ENCODE measurements at regions of chr10 and their contacts with region 1.

Region 1: DNA sequence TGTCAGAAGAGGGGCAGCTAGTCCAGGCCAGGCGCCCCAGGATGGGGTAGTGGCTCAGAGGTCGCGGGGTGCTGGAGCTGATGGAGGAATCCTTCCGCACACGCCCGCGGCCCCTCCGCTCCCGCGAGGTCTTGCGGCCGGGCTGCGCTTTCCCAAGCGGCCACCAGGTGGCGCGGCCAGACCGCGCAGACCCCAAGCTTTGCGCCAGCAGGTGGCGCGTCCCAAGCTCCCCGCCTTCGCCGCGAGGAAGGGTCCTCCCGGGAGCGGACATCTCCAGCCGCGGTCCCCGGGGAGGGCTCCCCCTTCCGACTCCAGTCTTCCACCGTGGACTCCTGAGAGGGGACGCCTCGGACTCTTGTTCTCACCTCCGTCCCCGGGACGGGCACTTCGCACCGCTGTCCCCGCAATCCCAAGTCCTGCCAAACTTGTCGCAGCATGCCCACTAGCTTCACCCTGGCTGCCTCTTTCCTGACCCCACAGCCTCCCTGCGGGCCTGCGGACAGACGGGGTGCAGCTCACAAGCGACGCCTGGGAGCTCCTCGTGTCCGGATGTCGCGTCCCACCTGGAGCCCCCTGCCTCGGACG is 19.4 kb downstream of the KCNK18 start:
- DNase-seq: peak; percentile 29
- H3K4me3 ChIP-seq: peak overlapping the region; percentile 67
- H3K27ac ChIP-seq: no peak overlapping the region
- H3K27me3 ChIP-seq: peaks cover 10% of the 10 kb centered on the region
- CTCF ChIP-seq: peak; percentile 100

Region 2: DNA sequence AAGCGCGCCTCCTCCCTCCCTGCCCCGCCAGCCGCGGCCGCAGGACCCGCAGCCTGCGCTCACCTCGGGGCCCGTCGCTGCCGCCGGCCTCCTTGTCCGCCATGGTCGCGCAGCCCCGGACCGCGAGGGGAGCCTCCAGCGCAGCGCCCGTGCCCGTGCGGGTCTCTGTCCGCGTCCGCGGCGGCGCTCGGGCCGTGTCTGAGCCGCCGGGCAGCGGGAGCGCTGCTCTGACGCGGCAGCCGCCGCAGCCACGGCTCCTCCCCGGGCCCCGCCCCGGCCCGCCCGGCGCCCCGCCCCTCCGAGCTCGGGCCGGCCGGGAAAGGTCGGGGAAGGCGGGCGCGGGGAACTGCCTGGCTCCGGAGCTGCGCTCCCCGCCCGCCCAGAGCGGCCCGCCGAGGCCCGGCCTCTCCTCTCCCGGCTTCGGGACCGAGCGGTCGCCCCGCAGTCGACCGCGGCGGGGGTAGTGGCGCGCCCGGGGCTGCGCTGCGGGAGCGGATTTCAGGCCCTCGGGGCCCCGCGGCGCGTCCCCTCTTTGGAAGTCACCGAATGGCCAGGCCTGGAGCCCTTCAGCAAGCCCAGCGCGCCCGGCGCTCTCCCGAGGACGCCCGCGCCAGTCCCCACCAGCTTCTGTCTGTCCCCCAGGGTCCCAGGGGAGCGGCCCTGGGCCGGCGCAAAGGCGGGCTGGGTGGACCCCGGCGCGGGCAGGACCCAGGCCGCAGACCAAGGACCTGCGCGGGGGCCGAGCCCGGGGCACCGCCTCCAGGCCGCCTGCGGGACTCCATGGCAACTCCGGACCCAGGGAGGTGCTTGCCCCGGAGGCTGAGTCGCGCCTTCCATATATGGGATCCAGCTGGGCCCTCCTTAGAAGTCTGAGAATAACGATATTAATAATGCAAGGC is 474.1 kb before region 1 on chr10 and contains the start of gene HSPA12A:
- CTCF ChIA-PET with region 1: no interaction called
- POLR2A ChIA-PET with region 1: no interaction called
- DNase-seq: peak; percentile 59
- H3K4me3 ChIP-seq: peak within 1 kb of the TSS; percentile 79
- H3K27ac ChIP-seq: peak within 1 kb of the TSS; percentile 65
- H3K27me3 ChIP-seq: no peaks in the 10 kb centered on the region
- CTCF ChIP-seq: no peak
- polyA plus RNA-seq, gene HSPA12A: 20.0 and 20.5 TPM in 2 replicates

Region 3: DNA sequence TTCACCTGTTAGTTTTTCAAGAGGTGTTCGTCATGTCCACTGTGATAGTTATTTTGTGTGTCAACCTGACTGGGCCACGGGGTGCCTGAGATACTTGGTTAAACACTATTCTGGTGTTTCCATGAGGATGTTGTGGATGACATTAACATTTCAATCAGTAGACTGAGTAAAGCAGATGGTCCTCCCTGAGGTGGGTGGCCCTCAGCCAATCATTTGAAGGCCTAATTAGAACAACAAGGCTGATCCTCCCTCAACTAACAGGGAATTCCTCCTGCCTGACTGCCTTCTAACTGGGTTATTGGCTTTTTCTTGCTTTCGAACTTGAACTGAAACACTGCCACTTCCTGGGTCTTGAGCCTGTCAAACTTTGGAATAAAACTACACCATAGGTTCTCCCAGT is 291.6 kb before region 1 on chr10:
- CTCF ChIA-PET with region 1: no interaction called
- POLR2A ChIA-PET with region 1: no interaction called
- DNase-seq: no peak
- H3K4me3 ChIP-seq: no peak overlapping the region
- H3K27ac ChIP-seq: no peak overlapping the region
- H3K27me3 ChIP-seq: no peaks in the 10 kb centered on the region
- CTCF ChIP-seq: no peak

Region 4: GRCh38 chr10:117226824-117227451 is 10.2 kb after region 1 on chr10:
- CTCF ChIA-PET with region 1: interaction called, 23 read pairs
- POLR2A ChIA-PET with region 1: no interaction called
- DNase-seq: no peak
- H3K4me3 ChIP-seq: no peak overlapping the region
- H3K27ac ChIP-seq: no peak overlapping the region
- H3K27me3 ChIP-seq: no peaks in the 10 kb centered on the region
- CTCF ChIP-seq: peak; percentile 49

Region 5: GRCh38 chr10:117246997-117247671 is 30.4 kb after region 1 on chr10:
- CTCF ChIA-PET with region 1: interaction called, 11 read pairs
- POLR2A ChIA-PET with region 1: no interaction called
- DNase-seq: no peak
- H3K4me3 ChIP-seq: no peak overlapping the region
- H3K27ac ChIP-seq: no peak overlapping the region
- H3K27me3 ChIP-seq: no peaks in the 10 kb centered on the region
- CTCF ChIP-seq: no peak

Region 6: DNA sequence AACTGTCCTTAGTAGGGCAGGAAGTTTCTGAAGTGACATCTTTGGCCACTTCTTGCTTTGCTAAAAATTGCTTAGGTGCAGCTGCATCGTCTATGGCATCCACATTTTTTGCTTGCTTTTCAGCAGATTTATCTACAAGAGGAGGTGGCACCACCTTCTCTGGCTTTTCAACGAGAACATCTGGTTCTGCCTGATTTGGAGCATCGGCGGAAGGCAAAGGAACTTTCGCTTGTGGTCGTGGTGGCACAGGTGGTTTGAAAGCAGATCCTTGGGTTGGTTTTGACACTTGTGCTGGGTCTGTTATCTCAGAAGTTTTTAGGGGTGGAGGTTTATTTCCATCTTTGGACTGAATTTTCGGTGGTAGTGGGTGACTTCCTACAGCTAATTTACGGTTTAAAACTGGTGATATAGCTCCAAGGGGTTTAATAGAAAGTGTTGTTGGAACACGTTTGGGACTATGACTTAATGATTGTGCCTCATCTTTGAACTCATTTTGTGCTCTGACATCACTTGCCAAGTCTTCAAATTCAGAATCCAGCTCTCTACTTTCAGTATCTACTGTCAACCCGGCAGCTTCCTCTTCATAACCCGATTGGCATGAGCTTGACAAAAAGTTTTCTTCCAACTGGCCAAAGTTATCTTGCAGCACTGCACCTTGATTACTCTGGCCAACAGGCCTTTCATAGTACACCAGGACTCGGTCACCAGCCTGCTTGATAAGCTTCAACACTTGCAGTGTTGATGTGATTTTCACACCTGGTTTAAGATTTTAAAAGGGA is 68.2 kb after region 1 on chr10:
- CTCF ChIA-PET with region 1: interaction called, 12 read pairs
- POLR2A ChIA-PET with region 1: no interaction called
- DNase-seq: no peak
- H3K4me3 ChIP-seq: no peak overlapping the region
- H3K27ac ChIP-seq: no peak overlapping the region
- H3K27me3 ChIP-seq: no peaks in the 10 kb centered on the region
- CTCF ChIP-seq: no peak

Region 7: GRCh38 chr10:117360994-117361667 is 144.4 kb after region 1 on chr10:
- CTCF ChIA-PET with region 1: interaction called, 11 read pairs
- POLR2A ChIA-PET with region 1: no interaction called
- DNase-seq: no peak
- H3K4me3 ChIP-seq: no peak overlapping the region
- H3K27ac ChIP-seq: no peak overlapping the region
- H3K27me3 ChIP-seq: no peaks in the 10 kb centered on the region
- CTCF ChIP-seq: no peak

Region 8: GRCh38 chr10:117442944-117443685 is 226.4 kb after region 1 on chr10:
- CTCF ChIA-PET with region 1: interaction called, 14 read pairs
- POLR2A ChIA-PET with region 1: no interaction called
- DNase-seq: no peak
- H3K4me3 ChIP-seq: no peak overlapping the region
- H3K27ac ChIP-seq: no peak overlapping the region
- H3K27me3 ChIP-seq: no peaks in the 10 kb centered on the region
- CTCF ChIP-seq: peak; percentile 71

Region 9: GRCh38 chr10:117449636-117450035 is 232.9 kb after region 1 on chr10:
- CTCF ChIA-PET with region 1: interaction called, 25 read pairs
- POLR2A ChIA-PET with region 1: no interaction called
- DNase-seq: no peak
- H3K4me3 ChIP-seq: no peak overlapping the region
- H3K27ac ChIP-seq: no peak overlapping the region
- H3K27me3 ChIP-seq: no peaks in the 10 kb centered on the region
- CTCF ChIP-seq: peak; percentile 10; the same call in 1 of the 2 replicates

Measured in AG04450 (cell line).